RWPE1 (cell line): ENCODE measurements at regions of chr6 and their contacts with region 1.

Region 1: GRCh38 chr6:109187399-109188114 is 92.2 kb downstream of the CEP57L1 start:
- DNase-seq: peak; percentile 57
- H3K27ac ChIP-seq: no peak overlapping the region
- CTCF ChIP-seq: peak; percentile 91

Region 2: GRCh38 chr6:109284675-109285074 is 97.1 kb after region 1 on chr6:
- CTCF ChIA-PET with region 1: no interaction called
- POLR2A ChIA-PET with region 1: no interaction called
- DNase-seq: no peak
- H3K27ac ChIP-seq: no peak overlapping the region
- CTCF ChIP-seq: no peak

Region 3: GRCh38 chr6:109356237-109356636 is 168.7 kb after region 1 on chr6:
- CTCF ChIA-PET with region 1: no interaction called
- POLR2A ChIA-PET with region 1: no interaction called
- DNase-seq: no peak
- H3K27ac ChIP-seq: no peak overlapping the region
- CTCF ChIP-seq: no peak

Region 4: GRCh38 chr6:109382576-109383437 is 195.2 kb after region 1 on chr6:
- CTCF ChIA-PET with region 1: interaction called, 16 read pairs
- POLR2A ChIA-PET with region 1: interaction called, 3 read pairs
- DNase-seq: peak; percentile 95
- H3K27ac ChIP-seq: peak overlapping the region; percentile 99
- CTCF ChIP-seq: peak; percentile 71

Region 5: GRCh38 chr6:109447878-109448555 is 260.5 kb after region 1 on chr6:
- CTCF ChIA-PET with region 1: interaction called, 11 read pairs
- POLR2A ChIA-PET with region 1: no interaction called
- DNase-seq: no peak
- H3K27ac ChIP-seq: peak overlapping the region; percentile 32; the same call in 1 of the 2 replicates
- CTCF ChIP-seq: no peak